GM12878 (cell line): ENCODE measurements at regions of chr11 and their contacts with region 1.

Region 1: DNA sequence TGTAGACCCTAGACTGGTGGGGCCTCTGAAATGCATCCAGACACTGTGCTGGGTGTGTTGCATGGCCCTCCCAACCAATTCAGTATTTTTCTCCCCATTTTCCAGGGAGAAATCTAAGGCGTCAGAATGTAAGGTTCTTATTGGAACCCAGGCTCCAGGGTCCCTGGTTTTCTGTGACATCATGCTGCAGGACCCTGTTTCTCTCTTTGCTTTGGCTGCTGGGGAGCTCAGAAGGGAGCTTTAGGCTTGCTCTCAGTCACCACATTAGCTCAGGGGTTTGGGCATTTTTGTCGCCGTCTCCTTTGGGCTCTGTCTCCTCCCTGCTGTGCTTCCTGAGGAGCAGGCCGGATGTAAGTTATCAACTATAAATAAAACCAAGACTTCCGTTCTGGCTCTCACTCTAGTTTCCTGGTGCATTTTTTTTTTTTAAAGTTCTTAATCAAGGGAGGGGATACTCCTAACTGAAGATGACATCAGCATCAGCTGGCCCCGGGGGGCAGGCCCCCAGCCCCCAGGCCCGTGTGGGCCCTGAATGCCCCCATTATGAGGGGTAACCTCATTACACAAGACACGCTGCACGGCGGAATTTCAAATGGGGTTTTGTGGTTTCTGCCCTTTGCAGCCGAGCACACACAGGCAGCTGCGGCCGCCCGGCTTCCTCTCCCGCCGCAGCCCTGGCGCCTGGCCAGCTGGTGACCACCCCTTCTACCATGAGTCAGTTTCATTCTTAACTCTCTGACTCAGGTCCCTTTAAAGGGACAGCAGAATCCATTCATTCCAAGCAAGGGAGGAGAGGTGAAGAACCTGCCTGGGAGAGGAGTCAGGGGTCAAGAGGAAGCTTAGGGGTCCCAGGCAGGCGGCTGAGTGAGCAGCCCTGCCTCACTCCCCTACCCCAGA is 3.2 kb downstream of the MYEOV start:
- DNase-seq: peak; percentile 91
- ATAC-seq: peak; percentile 66
- H3K4me3 ChIP-seq: peak overlapping the region; percentile 38; the same call in 1 of the 2 replicates
- H3K27ac ChIP-seq: peak overlapping the region; percentile 89
- H3K4me1 ChIP-seq: peaks cover 32% of the 10 kb centered on the region
- H3K27me3 ChIP-seq: no peaks in the 10 kb centered on the region
- CTCF ChIP-seq: no peak
- EP300 ChIP-seq: peak; percentile 78 to 90; a peak in 3 of 4 replicates
- POLR2A ChIP-seq: no peak
- RAD21 ChIP-seq: 0 out of 2 replicates have a peak, but pooled peaks have one; percentile 5

Region 2: DNA sequence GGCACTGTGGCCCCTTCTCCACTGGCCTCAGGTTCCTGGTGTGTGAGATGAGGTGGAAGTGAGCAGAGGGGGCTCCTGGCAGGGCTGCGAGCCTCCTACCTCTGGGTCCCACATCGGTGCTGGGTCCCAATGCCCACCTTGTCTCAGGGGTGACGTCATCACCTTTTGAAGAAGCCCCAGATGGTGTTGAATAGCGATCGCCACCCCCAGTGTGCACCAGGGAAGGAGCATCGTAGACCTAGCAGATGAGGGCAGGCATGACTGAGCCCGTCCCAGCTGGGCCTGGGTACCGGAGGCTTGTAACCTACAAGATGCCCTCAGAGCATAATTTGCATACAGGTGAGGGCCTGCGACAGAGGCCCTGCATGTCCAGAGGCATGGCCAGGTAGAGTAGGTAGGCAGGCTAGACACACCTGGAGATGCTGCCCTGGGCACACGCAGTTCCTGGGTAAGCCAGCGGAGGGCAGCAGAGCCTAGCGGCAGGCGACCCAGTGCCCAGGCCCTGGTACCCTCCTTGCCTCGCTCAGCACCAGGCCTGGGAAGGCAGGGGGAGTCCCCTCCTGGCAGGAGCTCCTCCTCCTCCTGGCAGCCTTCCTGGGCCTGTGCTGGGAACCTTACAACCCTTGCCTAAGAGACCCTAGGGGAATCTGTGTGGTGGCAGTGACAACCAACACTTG is 195.9 kb before region 1 on chr11:
- CTCF ChIA-PET with region 1: interaction called, 10 read pairs
- POLR2A ChIA-PET with region 1: no interaction called
- RAD21 ChIA-PET with region 1: interaction called, 6 read pairs
- SMC1A ChIA-PET with region 1: no interaction called
- in situ Hi-C with region 1: no loop called
- intact Hi-C with region 1: loop called (anchors 5 kb)
- DNase-seq: peak; percentile 20
- ATAC-seq: peak; percentile 92
- H3K4me3 ChIP-seq: no peak overlapping the region
- H3K27ac ChIP-seq: no peak overlapping the region
- H3K4me1 ChIP-seq: no peaks in the 10 kb centered on the region; the same call in 1 of the 2 replicates
- H3K27me3 ChIP-seq: no peaks in the 10 kb centered on the region
- CTCF ChIP-seq: peak; percentile 96 to 100 (median 99)
- EP300 ChIP-seq: no peak
- POLR2A ChIP-seq: no peak
- RAD21 ChIP-seq: peak; percentile 98

Region 3: DNA sequence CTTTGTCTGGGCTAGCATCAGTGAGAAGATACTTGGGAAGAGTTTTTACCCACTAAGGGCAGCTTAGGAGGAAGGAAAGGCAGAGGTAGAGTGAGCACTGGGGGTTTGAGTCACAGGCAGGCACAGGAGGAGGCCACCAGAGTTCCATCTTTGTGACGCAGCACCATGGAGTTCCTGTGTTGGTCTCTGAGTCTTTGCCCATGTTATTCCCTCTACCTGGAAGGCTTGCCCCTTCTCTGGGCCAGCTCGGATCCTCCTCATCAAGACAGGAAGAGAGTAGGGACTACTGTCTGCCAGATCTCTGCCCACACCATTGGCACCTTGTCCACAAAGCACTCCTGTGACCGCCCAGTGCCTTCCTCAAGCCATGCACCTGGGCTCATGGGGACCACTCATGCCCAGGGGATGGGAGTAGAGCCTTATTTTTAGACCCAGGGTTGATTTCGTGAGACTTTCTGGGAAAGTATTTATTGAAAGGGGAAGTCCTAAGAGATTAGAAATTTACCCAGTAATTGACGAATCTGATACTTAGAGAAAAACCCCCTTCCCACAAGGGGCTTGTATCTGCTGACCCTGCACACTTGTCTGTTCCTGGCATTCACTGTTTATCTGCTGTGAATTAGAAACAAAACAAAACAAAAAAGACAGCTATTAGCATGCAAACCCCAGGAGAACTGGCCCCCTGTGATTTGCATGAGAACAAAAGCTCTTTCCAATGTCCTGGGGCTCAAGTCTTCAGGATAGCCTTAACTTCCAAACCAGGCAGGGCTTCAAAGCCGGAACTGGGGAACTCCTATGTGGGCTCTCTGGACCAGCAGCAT is 39.1 kb before region 1 on chr11:
- CTCF ChIA-PET with region 1: interaction called, 11 read pairs
- POLR2A ChIA-PET with region 1: interaction called, 4 read pairs
- RAD21 ChIA-PET with region 1: interaction called, 26 read pairs
- SMC1A ChIA-PET with region 1: interaction called, 21 read pairs
- in situ Hi-C with region 1: no loop called
- intact Hi-C with region 1: loop called (anchors 1 kb)
- DNase-seq: peak; percentile 73
- ATAC-seq: peak; percentile 88
- H3K4me3 ChIP-seq: no peak overlapping the region
- H3K27ac ChIP-seq: peak overlapping the region; percentile 77
- H3K4me1 ChIP-seq: peaks cover 18% of the 10 kb centered on the region
- H3K27me3 ChIP-seq: no peaks in the 10 kb centered on the region
- CTCF ChIP-seq: peak in 1 of 3 experiments; percentile 31; a peak in 2 of 6 replicates
- EP300 ChIP-seq: peak; percentile 59 to 68; a peak in 2 of 4 replicates
- POLR2A ChIP-seq: no peak
- RAD21 ChIP-seq: peak; percentile 41; the same call in 1 of the 2 replicates

Region 4: DNA sequence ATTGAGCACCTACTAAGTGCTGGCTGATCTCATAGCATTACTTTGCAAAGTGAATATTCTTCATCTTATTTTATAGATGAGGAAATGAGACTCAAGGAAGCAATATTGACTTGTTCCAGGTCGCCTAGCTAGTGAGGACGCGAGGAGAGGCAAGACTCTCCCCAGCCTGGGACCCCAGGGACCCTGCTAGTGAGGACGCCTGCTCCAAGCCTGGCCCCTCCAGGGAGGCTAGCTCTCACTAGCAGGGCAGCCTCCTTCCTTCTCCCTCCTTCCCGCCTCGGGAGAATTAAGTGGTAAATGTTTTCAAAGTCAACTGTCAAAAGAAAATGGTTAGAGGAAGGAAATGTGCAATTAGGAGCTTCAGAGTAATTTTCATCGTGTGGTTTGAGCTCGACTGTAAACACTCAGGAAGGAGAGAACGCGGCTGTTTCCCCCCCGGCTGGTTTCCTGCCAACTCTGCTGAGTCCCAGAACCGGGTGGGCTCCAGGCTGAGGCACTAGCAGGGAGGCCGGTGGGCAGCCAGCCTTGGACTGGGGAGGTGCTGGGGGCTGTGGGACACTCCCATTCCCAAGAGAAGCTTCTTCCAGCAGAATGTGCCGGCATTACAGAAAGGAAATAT is 14.7 kb after region 1 on chr11:
- CTCF ChIA-PET with region 1: interaction called, 7 read pairs
- POLR2A ChIA-PET with region 1: interaction called, 9 read pairs
- RAD21 ChIA-PET with region 1: interaction called, 22 read pairs
- SMC1A ChIA-PET with region 1: interaction called, 31 read pairs
- in situ Hi-C with region 1: no loop called
- intact Hi-C with region 1: no loop called
- DNase-seq: no peak
- ATAC-seq: peak; percentile 35
- H3K4me3 ChIP-seq: no peak overlapping the region
- H3K27ac ChIP-seq: no peak overlapping the region
- H3K4me1 ChIP-seq: peaks cover 14% of the 10 kb centered on the region
- H3K27me3 ChIP-seq: no peaks in the 10 kb centered on the region; a peak in 1 of 4 replicates
- CTCF ChIP-seq: no peak
- EP300 ChIP-seq: no peak
- POLR2A ChIP-seq: no peak
- RAD21 ChIP-seq: no peak

Region 5: DNA sequence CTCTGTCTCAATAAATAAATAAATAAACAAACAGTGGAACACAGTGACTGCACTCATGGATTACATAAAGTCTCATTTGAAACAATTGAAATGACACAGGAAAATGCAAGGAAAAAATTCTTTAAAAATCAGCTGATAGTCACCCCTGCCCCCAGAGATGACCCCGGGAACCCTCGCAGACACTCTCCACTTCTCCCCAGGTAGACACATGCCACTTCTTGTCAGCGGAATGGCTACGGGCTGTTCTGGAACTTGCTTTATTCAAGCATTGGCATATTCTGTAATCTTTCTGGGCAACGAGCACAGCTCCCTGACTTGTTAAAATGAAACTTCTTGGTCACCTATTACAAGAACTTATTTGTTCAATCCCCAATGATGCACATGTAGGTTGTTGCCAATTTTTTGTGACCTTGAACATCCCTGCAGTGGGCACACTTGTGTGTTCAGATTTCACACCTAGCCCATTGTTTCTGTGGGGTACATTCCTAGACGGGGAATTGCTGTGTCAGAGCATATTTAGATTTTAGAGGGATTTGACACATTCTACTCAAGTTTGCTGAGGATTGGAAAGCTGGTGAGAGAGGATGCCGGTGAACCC is 29.6 kb after region 1 on chr11:
- CTCF ChIA-PET with region 1: no interaction called
- POLR2A ChIA-PET with region 1: no interaction called
- RAD21 ChIA-PET with region 1: no interaction called
- SMC1A ChIA-PET with region 1: no interaction called
- in situ Hi-C with region 1: no loop called
- intact Hi-C with region 1: no loop called
- DNase-seq: no peak
- ATAC-seq: no peak
- H3K4me3 ChIP-seq: no peak overlapping the region
- H3K27ac ChIP-seq: no peak overlapping the region
- H3K4me1 ChIP-seq: no peaks in the 10 kb centered on the region
- H3K27me3 ChIP-seq: no peaks in the 10 kb centered on the region
- CTCF ChIP-seq: no peak
- EP300 ChIP-seq: no peak
- POLR2A ChIP-seq: no peak
- RAD21 ChIP-seq: no peak

Region 6: GRCh38 chr11:69356703-69357457 is 59.7 kb after region 1 on chr11:
- CTCF ChIA-PET with region 1: no interaction called
- POLR2A ChIA-PET with region 1: no interaction called
- RAD21 ChIA-PET with region 1: no interaction called
- SMC1A ChIA-PET with region 1: no interaction called
- in situ Hi-C with region 1: no loop called
- intact Hi-C with region 1: no loop called
- DNase-seq: no peak
- ATAC-seq: no peak
- H3K4me3 ChIP-seq: no peak overlapping the region
- H3K27ac ChIP-seq: no peak overlapping the region
- H3K4me1 ChIP-seq: no peaks in the 10 kb centered on the region
- H3K27me3 ChIP-seq: no peaks in the 10 kb centered on the region
- CTCF ChIP-seq: no peak
- EP300 ChIP-seq: no peak
- POLR2A ChIP-seq: no peak
- RAD21 ChIP-seq: no peak

Region 7: DNA sequence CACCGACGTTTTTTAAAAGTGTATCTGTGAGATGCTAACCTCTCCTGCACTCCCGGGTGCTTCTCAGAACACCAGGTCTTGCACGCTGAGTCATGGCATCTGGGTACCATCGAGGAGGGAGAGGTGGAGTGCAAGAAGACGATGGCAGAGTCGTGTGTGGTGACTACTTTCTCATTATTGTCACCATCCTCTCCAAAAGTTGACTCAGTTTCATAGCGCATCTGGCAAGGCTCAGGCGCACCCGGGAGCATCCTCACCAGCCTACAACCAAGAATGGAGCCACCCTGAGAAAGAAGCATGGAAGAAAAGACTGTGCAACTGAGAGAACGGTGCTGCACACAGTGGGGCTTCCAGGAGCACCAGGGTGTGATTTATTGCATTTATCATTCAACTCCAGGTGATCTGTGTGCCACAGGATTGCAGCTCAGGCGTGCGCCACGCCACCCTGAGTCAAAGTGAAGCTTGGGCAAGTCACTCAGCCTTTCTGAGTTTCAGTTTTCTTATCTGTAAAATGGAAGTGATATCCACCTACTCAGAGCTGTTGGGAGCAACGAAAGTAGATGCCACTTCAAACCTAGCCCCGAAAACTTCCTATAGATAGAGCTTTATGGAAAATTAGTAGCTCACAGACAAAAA is 249.7 kb after region 1 on chr11:
- CTCF ChIA-PET with region 1: interaction called, 3 read pairs
- POLR2A ChIA-PET with region 1: no interaction called
- RAD21 ChIA-PET with region 1: interaction called, 13 read pairs
- SMC1A ChIA-PET with region 1: interaction called, 3 read pairs
- in situ Hi-C with region 1: no loop called
- intact Hi-C with region 1: no loop called
- DNase-seq: peak; percentile 45
- ATAC-seq: peak; percentile 90
- H3K4me3 ChIP-seq: no peak overlapping the region
- H3K27ac ChIP-seq: no peak overlapping the region
- H3K4me1 ChIP-seq: peaks cover 8% of the 10 kb centered on the region; the same call in 1 of the 2 replicates
- H3K27me3 ChIP-seq: no peaks in the 10 kb centered on the region; a peak in 1 of 4 replicates
- CTCF ChIP-seq: 0 out of 6 replicates have a peak, but pooled peaks of 1 of the 3 experiments have one; percentile 9
- EP300 ChIP-seq: no peak
- POLR2A ChIP-seq: no peak
- RAD21 ChIP-seq: 0 out of 2 replicates have a peak, but pooled peaks have one; percentile 3